GM12878 (cell line): ENCODE measurements at regions of chr12 and their contacts with region 1.

Region 1: GRCh38 chr12:12654691-12655460 is 41.1 kb downstream of the GPR19 start:
- DNase-seq: no peak
- ATAC-seq: 0 out of 3 replicates have a peak, but pooled peaks have one; percentile 8
- H3K4me3 ChIP-seq: no peak overlapping the region
- H3K27ac ChIP-seq: no peak overlapping the region
- H3K4me1 ChIP-seq: no peaks in the 10 kb centered on the region; the same call in 1 of the 2 replicates
- H3K27me3 ChIP-seq: no peaks in the 10 kb centered on the region
- CTCF ChIP-seq: no peak
- EP300 ChIP-seq: no peak
- POLR2A ChIP-seq: no peak
- RAD21 ChIP-seq: no peak

Region 2: DNA sequence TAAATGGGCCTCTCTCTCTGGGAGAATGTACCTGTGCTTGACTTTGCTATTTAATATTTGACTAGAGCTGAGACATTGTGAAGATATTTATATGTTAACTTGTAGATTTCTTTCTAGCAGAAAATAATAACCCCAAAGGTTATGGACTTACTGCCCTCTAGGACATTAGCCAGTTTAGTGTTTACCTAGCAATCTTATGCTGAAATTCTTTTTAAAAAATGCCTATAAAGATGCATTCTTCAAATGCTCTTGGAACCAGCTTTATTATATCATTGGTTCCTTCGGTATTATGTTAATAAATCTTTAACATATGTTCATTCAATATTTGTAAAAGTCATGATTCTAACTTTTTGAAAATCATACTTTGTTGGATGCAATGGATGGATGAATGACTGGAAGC is 13.1 kb after region 1 on chr12:
- CTCF ChIA-PET with region 1: interaction called, 16 read pairs
- POLR2A ChIA-PET with region 1: interaction called, 5 read pairs
- RAD21 ChIA-PET with region 1: interaction called, 11 read pairs
- SMC1A ChIA-PET with region 1: interaction called, 10 read pairs
- in situ Hi-C with region 1: no loop called
- intact Hi-C with region 1: no loop called
- DNase-seq: no peak
- ATAC-seq: no peak
- H3K4me3 ChIP-seq: no peak overlapping the region
- H3K27ac ChIP-seq: no peak overlapping the region
- H3K4me1 ChIP-seq: peaks cover 12% of the 10 kb centered on the region; the same call in 1 of the 2 replicates
- H3K27me3 ChIP-seq: no peaks in the 10 kb centered on the region
- CTCF ChIP-seq: no peak
- EP300 ChIP-seq: no peak
- POLR2A ChIP-seq: no peak
- RAD21 ChIP-seq: no peak

Region 3: DNA sequence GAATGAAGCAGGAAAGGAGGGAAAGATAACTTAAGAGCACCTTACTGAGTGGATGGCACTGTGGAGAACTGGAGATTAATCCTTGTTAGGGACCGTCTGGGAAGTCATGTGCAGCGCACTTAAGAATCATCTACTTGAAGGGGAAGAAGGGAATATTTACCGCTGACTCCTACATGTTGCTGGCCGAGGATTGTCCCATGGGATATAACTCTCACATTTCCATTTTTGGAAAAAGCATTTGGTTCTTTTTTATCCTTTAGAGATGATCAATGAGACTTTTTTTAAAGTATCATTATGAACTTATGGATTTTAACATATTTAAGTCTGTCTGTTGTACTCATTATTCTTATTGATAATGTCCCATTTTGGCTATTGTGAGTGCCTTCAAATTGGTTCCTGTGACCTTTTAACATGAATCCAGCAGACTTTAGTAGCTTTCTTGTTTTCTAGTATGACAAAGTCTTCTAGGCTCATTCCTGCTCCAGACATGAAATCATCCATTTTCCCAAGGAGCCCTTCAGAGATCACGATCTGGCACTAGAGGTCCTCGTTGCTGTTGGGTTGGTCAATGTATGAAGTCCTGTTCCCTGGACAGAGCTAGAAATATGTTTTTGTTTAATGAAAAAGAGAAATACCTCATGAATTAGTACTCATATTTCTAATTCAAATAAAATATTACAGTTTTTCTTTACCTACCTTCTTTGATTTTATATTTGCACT is 369.1 kb after region 1 on chr12:
- CTCF ChIA-PET with region 1: no interaction called
- POLR2A ChIA-PET with region 1: no interaction called
- RAD21 ChIA-PET with region 1: no interaction called
- SMC1A ChIA-PET with region 1: no interaction called
- in situ Hi-C with region 1: no loop called
- intact Hi-C with region 1: no loop called
- DNase-seq: no peak
- ATAC-seq: no peak
- H3K4me3 ChIP-seq: no peak overlapping the region
- H3K27ac ChIP-seq: no peak overlapping the region
- H3K4me1 ChIP-seq: no peaks in the 10 kb centered on the region
- H3K27me3 ChIP-seq: peaks cover 2 to 3% of the 10 kb centered on the region in 2 experiments; a peak in 2 of 4 replicates
- CTCF ChIP-seq: peak in 1 of 3 experiments; percentile 18; a peak in 1 of 6 replicates
- EP300 ChIP-seq: no peak
- POLR2A ChIP-seq: no peak
- RAD21 ChIP-seq: peak; percentile 26; the same call in 1 of the 2 replicates